ENCODE measurements at regions of chr9 and their contacts with region 1.

Region 1: DNA sequence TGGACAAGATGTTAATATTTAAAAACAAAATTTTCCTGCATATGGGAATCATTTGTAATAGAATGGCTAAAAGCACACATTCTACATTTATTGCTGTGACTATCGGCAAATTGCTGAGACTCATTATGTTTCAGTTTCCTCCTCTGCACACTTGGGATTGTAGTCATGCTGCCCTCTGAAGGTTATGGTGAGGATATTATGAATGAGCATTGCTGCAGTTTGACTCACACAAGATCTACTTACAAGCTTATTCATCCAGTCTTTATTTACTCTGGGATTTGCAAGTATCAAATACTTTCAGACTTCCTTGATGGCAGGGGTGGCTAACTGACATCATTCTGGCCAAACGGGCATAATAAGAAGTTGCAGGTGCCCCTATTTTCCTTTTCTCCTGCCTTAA is 9.5 kb upstream of the NFIL3 start:
- DNase-seq: no peak
- ATAC-seq: peak; percentile 72

Region 2: DNA sequence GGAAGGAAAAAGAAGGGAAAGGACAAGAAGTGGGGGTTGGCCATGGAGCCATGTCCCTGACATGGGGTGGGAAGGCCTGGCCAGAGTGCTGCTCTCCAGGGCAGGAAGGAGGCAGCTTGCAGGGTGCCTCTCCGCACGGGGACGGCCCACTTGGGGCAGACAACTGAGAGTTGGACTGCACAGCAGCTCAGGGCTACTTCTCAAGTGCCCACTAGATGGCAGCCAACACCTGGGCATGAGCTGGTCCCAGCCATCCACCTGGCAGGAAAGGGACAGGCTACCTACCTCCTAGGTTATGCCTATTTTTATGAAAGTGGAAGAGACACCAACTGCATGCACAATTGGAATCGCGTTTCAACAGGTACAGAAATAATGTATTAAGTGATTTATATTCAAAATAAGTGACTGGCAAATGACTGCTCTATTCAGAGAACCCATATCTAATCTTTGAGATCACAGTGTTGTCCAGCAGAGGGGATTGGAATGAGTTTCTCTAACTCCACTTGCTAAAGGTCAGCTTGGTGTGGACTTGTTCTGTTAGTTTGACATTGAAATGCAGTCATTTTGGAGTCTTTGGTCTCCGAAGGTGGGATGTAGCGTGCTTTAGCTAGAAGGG is 518.2 kb before region 1 on chr9:
- intact Hi-C with region 1: loop called (anchors 5 kb)
- DNase-seq: peak; percentile 74
- ATAC-seq: peak; percentile 90

Region 3: DNA sequence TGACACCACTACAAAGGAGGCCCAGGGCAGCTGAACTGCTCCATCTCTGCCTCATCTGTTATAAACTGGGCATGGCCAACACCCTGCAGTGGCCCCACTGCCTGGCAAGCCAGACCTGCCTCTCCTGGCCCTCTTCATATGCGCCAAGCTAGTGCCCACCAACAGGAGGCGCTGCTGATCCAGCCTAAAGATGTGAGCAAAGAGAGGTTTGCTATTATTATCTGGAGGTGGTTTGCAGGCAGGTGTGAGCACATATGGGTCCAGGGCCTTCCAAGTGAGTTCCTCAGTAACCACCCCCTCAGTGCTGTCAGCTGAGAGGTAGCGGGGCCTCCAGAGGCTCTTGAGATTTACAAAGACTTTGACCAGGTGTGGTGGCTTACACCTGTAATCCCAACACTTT is 399.4 kb before region 1 on chr9:
- intact Hi-C with region 1: loop called (anchors 5 kb)
- DNase-seq: peak; percentile 45
- ATAC-seq: no peak

Region 4: GRCh38 chr9:91500509-91501011 is 67.4 kb after region 1 on chr9:
- intact Hi-C with region 1: no loop called
- DNase-seq: no peak
- ATAC-seq: no peak